Naive thymus-derived CD4-positive, alpha-beta T cell (primary cell): ENCODE measurements at regions of chr14 and their contacts with region 1.

Region 1: GRCh38 chr14:22556990-22557623 is 31.9 kb downstream of the DAD1 start:
- DNase-seq: peak; percentile 84 to 97 (median 93)
- ATAC-seq: peak; percentile 48
- H3K4me3 ChIP-seq: peak overlapping the region; percentile 65
- H3K4me3 Mint-ChIP-seq: peak overlapping the region; percentile 67 to 95 (median 88)
- H3K27ac ChIP-seq: peak overlapping the region; percentile 96
- H3K27ac Mint-ChIP-seq: peak overlapping the region; percentile 94 to 99 (median 99)
- H3K4me1 ChIP-seq: peaks cover 87 to 90% of the 10 kb centered on the region in 2 donors
- H3K4me1 Mint-ChIP-seq: peaks cover 62 to 95% (median 92%) of the 10 kb centered on the region in 7 donors
- H3K27me3 ChIP-seq: no peaks in the 10 kb centered on the region
- H3K27me3 Mint-ChIP-seq: peaks cover 0 to 4% (median 0%) of the 10 kb centered on the region in 5 donors

Region 2: DNA sequence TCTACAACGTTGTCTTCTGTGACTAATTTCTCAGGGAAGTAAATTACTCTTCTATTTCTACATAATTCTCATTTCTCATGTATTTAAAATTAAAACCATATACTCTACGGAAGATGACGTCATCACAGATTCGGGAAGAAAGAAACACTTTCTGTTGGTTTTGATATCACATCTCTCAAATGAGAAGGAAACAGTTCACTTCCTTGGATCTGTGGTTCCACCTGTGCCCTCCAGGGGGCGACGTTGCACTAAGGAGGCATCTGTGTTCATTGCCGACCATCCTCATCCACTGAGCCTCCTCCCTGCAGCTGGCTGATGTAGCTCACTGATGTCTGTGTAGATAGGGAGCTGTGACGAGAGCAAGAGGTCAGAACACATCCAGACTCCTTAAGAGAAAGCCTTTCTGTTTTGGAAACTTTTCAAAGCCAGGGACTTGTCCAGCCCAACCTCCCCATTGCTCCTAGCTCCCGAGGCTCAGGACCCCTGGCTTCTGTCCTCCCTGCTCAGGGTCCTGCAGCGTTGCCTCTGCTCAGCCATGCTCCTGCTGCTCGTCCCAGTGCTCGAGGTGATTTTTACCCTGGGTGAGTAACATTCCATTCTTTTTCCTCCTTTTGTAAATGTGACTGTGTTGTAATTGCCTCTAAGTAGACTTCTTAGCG is 710.8 kb before region 1 on chr14:
- CTCF ChIA-PET with region 1: interaction called, 3 read pairs
- POLR2A ChIA-PET with region 1: interaction called, 21 read pairs
- intact Hi-C with region 1: loop called (anchors 1 to 5 kb)
- DNase-seq: peak; percentile 48 to 71 (median 64)
- ATAC-seq: peak; percentile 90
- H3K4me3 ChIP-seq: peak overlapping the region; percentile 36
- H3K4me3 Mint-ChIP-seq: peak overlapping the region; percentile 75 to 95 (median 84)
- H3K27ac ChIP-seq: peak overlapping the region; percentile 52
- H3K27ac Mint-ChIP-seq: peak overlapping the region in 8 of 9 donors; percentile 41 to 91 (median 85)
- H3K4me1 ChIP-seq: no peaks in the 10 kb centered on the region
- H3K4me1 Mint-ChIP-seq: peaks cover 1 to 17% (median 10%) of the 10 kb centered on the region in 7 donors
- H3K27me3 ChIP-seq: no peaks in the 10 kb centered on the region
- H3K27me3 Mint-ChIP-seq: peaks cover 13 to 52% (median 24%) of the 10 kb centered on the region in 5 donors

Region 3: DNA sequence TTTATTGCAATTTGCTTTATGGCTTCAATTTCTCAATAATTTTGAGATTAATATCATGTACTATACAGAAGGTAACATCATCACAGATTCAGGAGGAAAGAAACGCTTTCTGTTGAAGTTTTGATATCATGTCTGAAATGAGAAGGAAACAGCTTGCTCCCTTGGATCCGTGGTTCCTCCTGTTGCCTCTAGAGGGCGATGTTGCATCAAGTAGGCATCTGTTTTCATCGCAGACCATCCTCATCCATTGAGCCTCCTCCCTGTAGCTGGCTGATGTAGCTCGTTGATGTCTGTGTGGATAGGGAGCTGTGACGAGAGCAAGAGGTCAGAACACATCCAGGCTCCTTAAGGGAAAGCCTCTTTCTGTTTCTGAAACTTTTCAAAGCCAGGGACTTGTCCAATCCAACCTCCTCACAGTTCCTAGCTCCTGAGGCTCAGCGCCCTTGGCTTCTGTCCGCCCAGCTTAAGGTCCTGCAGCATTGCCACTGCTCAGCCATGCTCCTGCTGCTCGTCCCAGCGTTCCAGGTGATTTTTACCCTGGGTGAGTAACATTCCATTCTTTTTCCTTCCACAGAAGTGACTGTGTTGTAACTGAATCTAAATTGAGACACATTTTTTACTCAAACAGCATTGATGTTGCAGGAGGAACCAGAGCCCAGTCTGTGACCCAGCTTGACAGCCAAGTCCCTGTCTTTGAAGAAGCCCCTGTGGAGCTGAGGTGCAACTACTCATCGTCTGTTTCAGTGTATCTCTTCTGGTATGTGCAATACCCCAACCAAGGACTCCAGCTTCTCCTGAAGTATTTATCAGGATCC is 578.7 kb before region 1 on chr14:
- CTCF ChIA-PET with region 1: interaction called, 4 read pairs
- POLR2A ChIA-PET with region 1: interaction called, 15 read pairs
- intact Hi-C with region 1: loop called in 1 of 2 experiments (anchors 1 kb)
- DNase-seq: peak; percentile 20 to 71 (median 61)
- ATAC-seq: peak; percentile 85
- H3K4me3 ChIP-seq: peak overlapping the region; percentile 9
- H3K4me3 Mint-ChIP-seq: peak overlapping the region; percentile 43 to 84 (median 74)
- H3K27ac ChIP-seq: peak overlapping the region; percentile 26
- H3K27ac Mint-ChIP-seq: peak overlapping the region in 8 of 9 donors; percentile 60 to 85 (median 76)
- H3K4me1 ChIP-seq: peaks cover 0 to 4% of the 10 kb centered on the region in 2 donors
- H3K4me1 Mint-ChIP-seq: peaks cover 6 to 51% (median 25%) of the 10 kb centered on the region in 7 donors
- H3K27me3 ChIP-seq: no peaks in the 10 kb centered on the region
- H3K27me3 Mint-ChIP-seq: peaks cover 0 to 31% (median 0%) of the 10 kb centered on the region in 5 donors

Region 4: DNA sequence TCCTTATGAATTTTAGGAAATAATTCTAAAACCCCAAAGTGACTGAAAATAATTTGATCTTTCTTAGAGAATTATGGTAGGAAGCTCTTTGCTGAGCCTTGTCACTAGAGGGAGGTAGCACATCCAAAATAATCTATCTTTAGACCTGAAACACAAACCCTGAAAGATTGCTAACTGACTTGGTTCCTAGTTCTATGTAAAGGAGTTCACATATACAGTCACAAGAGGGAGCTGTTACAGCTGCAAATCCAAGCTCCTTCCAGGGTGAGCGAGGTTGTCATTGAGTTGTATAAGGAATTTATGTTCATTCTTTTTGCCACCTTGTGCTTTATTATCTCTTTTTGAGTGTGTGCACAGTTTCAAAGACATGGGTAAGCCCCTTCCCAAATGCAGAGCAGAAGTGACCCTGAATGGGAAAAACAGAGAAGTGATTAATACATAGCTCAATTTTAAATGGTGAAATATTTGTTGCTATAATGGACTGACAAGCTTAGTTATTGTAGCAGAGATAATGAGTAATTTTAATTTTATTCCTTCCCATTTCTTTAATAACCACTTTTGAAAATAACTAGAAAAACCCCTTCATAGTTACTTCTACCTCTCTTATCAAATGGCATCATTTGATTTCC is 356.0 kb before region 1 on chr14:
- CTCF ChIA-PET with region 1: interaction called, 4 read pairs
- POLR2A ChIA-PET with region 1: interaction called, 3 read pairs
- intact Hi-C with region 1: loop called in 1 of 2 experiments (anchors 1 kb)
- DNase-seq: peak in 6 of 9 donors; percentile 18 to 56 (median 37)
- ATAC-seq: peak; percentile 84
- H3K4me3 ChIP-seq: no peak overlapping the region
- H3K4me3 Mint-ChIP-seq: peak overlapping the region in 3 of 10 donors; percentile 25 to 63 (median 33)
- H3K27ac ChIP-seq: no peak overlapping the region
- H3K27ac Mint-ChIP-seq: peak overlapping the region in 2 of 9 donors; percentile 54 to 75
- H3K4me1 ChIP-seq: no peaks in the 10 kb centered on the region
- H3K4me1 Mint-ChIP-seq: peaks cover 0 to 17% (median 8%) of the 10 kb centered on the region in 7 donors
- H3K27me3 ChIP-seq: no peaks in the 10 kb centered on the region
- H3K27me3 Mint-ChIP-seq: no peaks in the 10 kb centered on the region

Region 5: DNA sequence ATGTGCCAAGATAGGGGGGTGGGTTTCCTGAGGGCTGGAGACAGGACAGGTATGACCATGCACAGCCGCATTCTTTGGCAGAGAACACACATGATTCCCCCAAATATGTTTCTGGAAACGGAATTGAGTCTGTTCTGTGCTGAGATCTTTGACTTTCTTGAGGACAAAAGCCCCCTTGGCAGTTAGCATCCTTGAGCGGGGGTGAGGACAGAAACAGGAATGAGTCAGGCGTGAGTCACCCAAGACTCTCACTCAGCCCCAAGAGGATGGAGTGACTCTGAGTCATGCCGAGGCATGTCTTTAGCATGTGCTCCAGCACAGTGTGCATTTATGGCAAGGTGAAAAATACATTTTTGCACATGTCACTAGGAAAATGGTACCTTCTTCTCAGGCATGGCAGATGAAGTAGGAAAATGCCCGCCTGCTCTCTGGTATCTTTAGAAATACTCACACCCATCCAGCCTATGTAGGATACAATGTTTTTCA is 20.2 kb before region 1 on chr14:
- CTCF ChIA-PET with region 1: interaction called, 26 read pairs
- POLR2A ChIA-PET with region 1: interaction called, 525 read pairs
- intact Hi-C with region 1: loop called in 1 of 2 experiments (anchors 1 kb)
- DNase-seq: peak in 2 of 9 donors; percentile 75 to 90
- ATAC-seq: peak; percentile 88
- H3K4me3 ChIP-seq: peak overlapping the region; percentile 46
- H3K4me3 Mint-ChIP-seq: peak overlapping the region; percentile 79 to 93 (median 87)
- H3K27ac ChIP-seq: peak overlapping the region; percentile 90
- H3K27ac Mint-ChIP-seq: peak overlapping the region; percentile 92 to 99 (median 94)
- H3K4me1 ChIP-seq: peaks cover 94 to 97% of the 10 kb centered on the region in 2 donors
- H3K4me1 Mint-ChIP-seq: peaks cover 61 to 100% (median 97%) of the 10 kb centered on the region in 7 donors
- H3K27me3 ChIP-seq: no peaks in the 10 kb centered on the region
- H3K27me3 Mint-ChIP-seq: no peaks in the 10 kb centered on the region

Region 6: DNA sequence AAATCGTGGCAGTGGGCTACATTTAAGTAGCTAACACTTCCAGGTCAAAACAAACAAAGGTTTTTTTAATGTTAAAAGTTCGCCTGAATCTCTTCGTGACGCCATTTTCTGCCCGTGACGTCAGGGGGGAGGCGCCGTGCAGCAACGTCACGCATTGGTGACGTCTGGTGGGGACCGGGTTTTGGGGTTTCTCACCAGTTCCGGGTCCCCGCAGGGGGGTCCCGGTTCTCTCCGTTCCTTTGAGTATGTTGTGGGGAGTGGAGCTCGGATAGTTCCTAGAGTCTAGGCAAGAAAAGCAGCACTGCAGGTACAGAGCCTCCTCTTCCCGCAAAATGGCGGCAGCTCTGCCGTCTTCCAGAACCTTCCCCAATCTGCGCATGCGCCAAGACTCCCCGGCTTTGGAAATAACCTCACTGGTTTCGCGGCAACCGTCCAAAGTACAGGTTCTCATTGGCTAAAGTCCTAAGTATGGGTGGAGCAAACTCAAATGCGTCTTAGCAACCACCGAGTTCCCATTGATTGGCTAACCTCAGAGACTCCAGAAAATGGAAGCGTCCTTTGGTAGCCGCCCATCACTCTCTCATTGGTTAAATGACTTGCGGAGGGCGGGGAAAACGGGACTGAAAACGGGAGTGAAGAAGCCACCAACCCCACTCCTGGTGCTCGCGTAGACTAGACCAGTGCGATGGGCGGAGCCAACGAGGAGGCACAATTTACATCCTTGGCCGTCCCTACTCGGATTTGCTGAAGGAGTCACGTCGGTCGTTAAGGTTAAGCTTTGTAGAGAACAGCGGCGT is 361.9 kb after region 1 on chr14 and contains the start of gene RBM23:
- CTCF ChIA-PET with region 1: no interaction called
- POLR2A ChIA-PET with region 1: interaction called, 3 read pairs
- intact Hi-C with region 1: loop called in 1 of 2 experiments (anchors 1 kb)
- DNase-seq: peak; percentile 98 to 100 (median 100)
- ATAC-seq: peak; percentile 92
- H3K4me3 ChIP-seq: peak within 1 kb of the TSS; percentile 96
- H3K4me3 Mint-ChIP-seq: peak within 1 kb of the TSS; percentile 93 to 100 (median 97)
- H3K27ac ChIP-seq: peak within 1 kb of the TSS; percentile 98
- H3K27ac Mint-ChIP-seq: peak within 1 kb of the TSS; percentile 100
- H3K4me1 ChIP-seq: peaks cover 0 to 19% of the 10 kb centered on the region in 2 donors
- H3K4me1 Mint-ChIP-seq: peaks cover 18 to 56% (median 49%) of the 10 kb centered on the region in 7 donors
- H3K27me3 ChIP-seq: no peaks in the 10 kb centered on the region
- H3K27me3 Mint-ChIP-seq: peaks cover 0 to 4% (median 0%) of the 10 kb centered on the region in 5 donors
- total RNA-seq, gene RBM23: 91.9 to 140 (median 99.1) TPM